Esophagus squamous epithelium (tissue), 5 donors: ENCODE measurements at regions of chr17 and their contacts with region 1.

Region 1: DNA sequence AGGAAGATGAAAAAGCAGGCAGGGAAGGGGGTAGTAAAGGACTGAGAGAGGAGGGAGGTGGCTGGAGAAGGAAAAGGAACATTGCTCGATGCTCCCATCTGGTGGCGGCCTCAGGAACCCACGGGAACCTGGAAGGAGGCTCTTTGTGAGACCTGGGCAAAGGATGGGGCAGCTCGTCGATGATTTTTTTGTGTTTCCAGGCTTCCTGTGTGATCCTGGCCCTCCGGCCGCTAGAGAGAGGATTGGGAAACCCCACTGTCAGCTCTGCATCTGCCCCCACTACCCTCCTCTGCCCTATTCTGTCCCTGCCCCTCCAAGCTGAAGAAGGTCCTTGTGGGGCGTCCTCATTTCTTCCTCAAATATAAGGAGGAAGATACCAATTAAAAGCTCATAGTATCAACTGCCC is 6.6 kb downstream of the WFIKKN2 start:
- DNase-seq: no peak
- H3K4me3 ChIP-seq: no peak overlapping the region
- H3K27ac ChIP-seq: no peak overlapping the region
- H3K4me1 ChIP-seq: peaks cover 0 to 22% (median 0%) of the 10 kb centered on the region in 3 donors
- H3K27me3 ChIP-seq: no peaks in the 10 kb centered on the region
- CTCF ChIP-seq: peak; percentile 64 to 89 (median 81)
- POLR2A ChIP-seq: no peak

Region 2: GRCh38 chr17:50783193-50783660 is 58.7 kb before region 1 on chr17:
- intact Hi-C with region 1: loop called (anchors 2 kb)
- DNase-seq: peak; percentile 24
- H3K4me3 ChIP-seq: no peak overlapping the region
- H3K27ac ChIP-seq: no peak overlapping the region
- H3K4me1 ChIP-seq: peaks cover 14 to 50% (median 30%) of the 10 kb centered on the region in 3 donors
- H3K27me3 ChIP-seq: no peaks in the 10 kb centered on the region
- CTCF ChIP-seq: peak; percentile 85 to 100 (median 99)
- POLR2A ChIP-seq: no peak